BJ (cell line): ENCODE measurements at regions of chr10 and their contacts with region 1.

Region 1: DNA sequence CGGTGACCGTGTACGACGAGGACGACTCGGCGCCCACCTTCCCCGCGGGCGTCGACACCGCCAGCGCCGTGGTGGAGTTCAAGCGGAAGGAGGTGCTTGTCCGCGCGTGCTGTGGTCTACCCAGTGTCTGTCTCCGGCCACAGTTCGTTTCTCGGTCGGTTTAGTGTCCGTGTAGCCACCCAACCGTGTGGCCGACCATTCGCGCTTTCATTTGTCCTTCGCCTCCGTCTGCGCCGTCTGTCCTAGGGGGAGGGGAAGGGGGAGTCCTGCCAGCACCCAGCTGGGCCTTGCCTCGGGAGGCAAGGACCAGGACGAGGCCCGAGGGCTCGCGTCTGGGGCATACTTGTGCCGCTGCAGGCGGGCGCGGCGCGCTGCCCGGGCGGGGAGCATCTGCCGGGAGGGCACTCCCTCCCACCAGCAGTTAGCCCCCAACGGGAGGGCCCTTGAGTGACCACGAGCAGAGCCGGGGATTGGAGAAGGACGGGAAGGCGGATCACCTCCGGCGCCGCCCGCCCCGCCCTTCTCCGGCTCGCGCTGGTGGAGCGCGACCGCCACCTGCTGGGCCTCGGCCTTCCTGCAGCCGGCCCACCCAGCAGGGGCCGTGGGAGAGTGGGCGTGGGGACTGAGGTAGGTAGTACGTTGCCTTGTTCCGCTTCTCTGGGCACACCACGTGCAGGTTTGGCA is 28.4 kb downstream of the RET start:
- DNase-seq: peak; percentile 19
- H3K4me3 ChIP-seq: peak overlapping the region; percentile 57
- H3K27me3 ChIP-seq: peaks cover 3% of the 10 kb centered on the region
- CTCF ChIP-seq: peak; percentile 85

Region 2: GRCh38 chr10:42866115-42866995 is 238.9 kb before region 1 on chr10:
- CTCF ChIA-PET with region 1: interaction called, 57 read pairs
- POLR2A ChIA-PET with region 1: no interaction called
- DNase-seq: no peak
- H3K4me3 ChIP-seq: peak overlapping the region; percentile 7; the same call in 1 of the 2 replicates
- H3K27me3 ChIP-seq: peaks cover 7% of the 10 kb centered on the region
- CTCF ChIP-seq: peak; percentile 81

Region 3: DNA sequence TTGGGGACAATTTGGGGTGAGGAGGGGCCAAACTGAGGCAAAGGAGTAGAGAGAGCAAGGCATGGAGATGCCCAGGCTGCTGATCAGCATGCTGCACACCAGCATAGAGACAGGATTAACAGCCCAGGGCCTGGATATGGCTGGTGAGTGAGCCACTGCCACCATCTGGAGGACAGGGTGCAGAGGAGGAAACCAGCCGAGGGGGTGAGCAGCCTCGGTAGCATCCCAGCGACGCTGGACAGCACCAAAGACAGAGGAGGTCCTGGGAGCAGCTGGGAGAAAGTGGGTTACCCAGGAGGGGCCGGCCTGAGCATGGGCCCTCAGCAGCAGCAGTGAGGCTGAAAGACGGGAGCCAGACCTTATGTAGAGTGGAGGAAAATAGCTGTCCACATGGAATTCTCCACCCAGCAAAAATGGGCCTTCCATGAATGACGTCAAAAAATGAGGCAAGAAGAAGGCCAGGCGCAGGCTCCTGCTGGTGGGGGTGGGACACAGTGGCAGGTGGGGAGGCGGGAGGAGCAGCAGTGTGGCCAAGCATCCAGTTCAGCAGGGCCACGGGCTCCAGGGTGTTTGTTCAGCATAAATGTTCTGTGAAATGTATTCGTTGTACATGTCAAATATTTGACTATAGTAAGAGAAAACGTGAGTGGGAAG is 11.7 kb before region 1 on chr10:
- CTCF ChIA-PET with region 1: interaction called, 13 read pairs
- POLR2A ChIA-PET with region 1: no interaction called
- DNase-seq: no peak
- H3K4me3 ChIP-seq: no peak overlapping the region
- H3K27me3 ChIP-seq: peaks cover 2% of the 10 kb centered on the region
- CTCF ChIP-seq: no peak